Heart left ventricle (tissue), 16 donors: ENCODE measurements at regions of chr14 and their contacts with region 1.

Region 1: GRCh38 chr14:31561155-31561846 is at the start of gene NUBPL:
- DNase-seq: peak; percentile 94 to 98 (median 96)
- ATAC-seq: peak; percentile 92 to 98 (median 96)
- H3K4me3 ChIP-seq: peak within 1 kb of the TSS; percentile 77 to 98 (median 84)
- H3K27ac ChIP-seq: peak within 1 kb of the TSS; percentile 43 to 95 (median 89)
- H3K4me1 ChIP-seq: peaks cover 0 to 29% (median 10%) of the 10 kb centered on the region in 12 donors
- H3K27me3 ChIP-seq: no peaks in the 10 kb centered on the region
- CTCF ChIP-seq: no peak
- POLR2A ChIP-seq: peak in 1 of 2 donors; percentile 60
- total RNA-seq, gene NUBPL: 16.1 to 28.7 (median 19.1) TPM

Region 2: GRCh38 chr14:31456841-31457664 is 104.2 kb before region 1 on chr14 and contains the start of gene DTD2:
- intact Hi-C with region 1: loop called in 2 of 10 experiments (anchors 10 kb)
- DNase-seq: peak; percentile 95 to 97 (median 96)
- ATAC-seq: peak; percentile 100
- H3K4me3 ChIP-seq: peak within 1 kb of the TSS; percentile 50 to 86 (median 70)
- H3K27ac ChIP-seq: peak within 1 kb of the TSS; percentile 70 to 97 (median 89)
- H3K4me1 ChIP-seq: peaks cover 0 to 41% (median 11%) of the 10 kb centered on the region in 12 donors
- H3K27me3 ChIP-seq: no peaks in the 10 kb centered on the region
- CTCF ChIP-seq: peak in 3 of 12 donors; percentile 8 to 23 (median 8)
- POLR2A ChIP-seq: peak in 1 of 2 donors; percentile 93
- total RNA-seq, gene DTD2: 5.4 to 12.2 (median 8.2) TPM

Region 3: GRCh38 chr14:31465111-31465510 is 96.2 kb before region 1 on chr14:
- intact Hi-C with region 1: loop called in 1 of 10 experiments (anchors 10 kb)
- DNase-seq: no peak
- ATAC-seq: no peak
- H3K4me3 ChIP-seq: no peak overlapping the region
- H3K27ac ChIP-seq: no peak overlapping the region
- H3K4me1 ChIP-seq: no peaks in the 10 kb centered on the region
- H3K27me3 ChIP-seq: no peaks in the 10 kb centered on the region
- CTCF ChIP-seq: no peak
- POLR2A ChIP-seq: no peak

Region 4: GRCh38 chr14:31476131-31476866 is 85.0 kb before region 1 on chr14:
- intact Hi-C with region 1: no loop called
- DNase-seq: no peak
- ATAC-seq: peak in 1 of 4 donors; percentile 52
- H3K4me3 ChIP-seq: no peak overlapping the region
- H3K27ac ChIP-seq: peak overlapping the region in 1 of 12 donors; percentile 2
- H3K4me1 ChIP-seq: peaks cover 0 to 13% (median 7%) of the 10 kb centered on the region in 12 donors
- H3K27me3 ChIP-seq: no peaks in the 10 kb centered on the region
- CTCF ChIP-seq: no peak
- POLR2A ChIP-seq: no peak

Region 5: DNA sequence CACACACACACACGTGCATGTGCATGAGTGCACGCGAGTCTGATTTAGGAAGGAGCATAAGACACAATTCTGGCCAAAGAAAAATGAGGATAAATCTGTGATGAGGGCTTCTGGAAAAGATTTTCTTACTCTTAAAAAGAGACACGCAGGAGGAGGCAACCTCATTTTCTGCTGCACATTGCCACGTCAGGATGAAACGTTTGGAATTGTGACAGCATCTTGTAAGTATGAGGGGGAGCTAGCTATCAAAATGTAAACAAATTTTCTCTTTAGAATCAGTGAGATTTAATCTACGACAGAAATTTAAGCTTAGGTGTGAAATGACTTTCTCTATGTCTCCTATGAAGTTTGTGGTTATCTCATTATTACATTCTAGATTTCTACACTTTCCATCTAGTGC is 31.2 kb before region 1 on chr14:
- intact Hi-C with region 1: no loop called
- DNase-seq: no peak
- ATAC-seq: no peak
- H3K4me3 ChIP-seq: no peak overlapping the region
- H3K27ac ChIP-seq: no peak overlapping the region
- H3K4me1 ChIP-seq: no peaks in the 10 kb centered on the region
- H3K27me3 ChIP-seq: no peaks in the 10 kb centered on the region
- CTCF ChIP-seq: no peak
- POLR2A ChIP-seq: no peak

Region 6: GRCh38 chr14:31895206-31895605 is 333.9 kb after region 1 on chr14:
- intact Hi-C with region 1: loop called in 1 of 10 experiments (anchors 10 kb)
- DNase-seq: no peak
- ATAC-seq: no peak
- H3K4me3 ChIP-seq: no peak overlapping the region
- H3K27ac ChIP-seq: peak overlapping the region in 1 of 12 donors; percentile 21
- H3K4me1 ChIP-seq: peaks cover 0 to 28% (median 15%) of the 10 kb centered on the region in 12 donors
- H3K27me3 ChIP-seq: no peaks in the 10 kb centered on the region
- CTCF ChIP-seq: no peak
- POLR2A ChIP-seq: no peak